ENCODE measurements at regions of chr21 and their contacts with region 1.

Region 1: GRCh38 chr21:20308586-20309315 is 689.5 kb upstream of the NCAM2 start:
- DNase-seq: no peak

Region 2: DNA sequence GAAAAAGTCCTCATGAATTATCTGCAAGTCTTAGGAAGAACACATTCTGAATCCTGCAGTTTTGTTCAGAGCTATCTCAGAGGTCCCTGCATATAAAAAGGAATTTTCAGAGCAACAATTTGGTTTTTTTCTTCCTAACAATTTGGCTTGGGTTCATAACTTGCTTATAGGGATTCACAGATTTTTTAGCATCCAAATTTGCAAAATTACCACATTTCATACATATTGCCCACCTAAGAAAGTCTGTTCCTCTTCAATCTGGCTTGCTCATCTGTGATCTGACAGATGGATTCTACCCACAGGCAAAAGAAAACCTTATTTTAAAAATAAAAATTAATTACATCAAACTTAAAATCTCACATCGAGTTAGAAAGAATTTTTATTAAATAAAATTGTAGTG is 24.9 kb before region 1 on chr21:
- intact Hi-C with region 1: loop called (anchors 1 kb)
- DNase-seq: no peak

Region 3: DNA sequence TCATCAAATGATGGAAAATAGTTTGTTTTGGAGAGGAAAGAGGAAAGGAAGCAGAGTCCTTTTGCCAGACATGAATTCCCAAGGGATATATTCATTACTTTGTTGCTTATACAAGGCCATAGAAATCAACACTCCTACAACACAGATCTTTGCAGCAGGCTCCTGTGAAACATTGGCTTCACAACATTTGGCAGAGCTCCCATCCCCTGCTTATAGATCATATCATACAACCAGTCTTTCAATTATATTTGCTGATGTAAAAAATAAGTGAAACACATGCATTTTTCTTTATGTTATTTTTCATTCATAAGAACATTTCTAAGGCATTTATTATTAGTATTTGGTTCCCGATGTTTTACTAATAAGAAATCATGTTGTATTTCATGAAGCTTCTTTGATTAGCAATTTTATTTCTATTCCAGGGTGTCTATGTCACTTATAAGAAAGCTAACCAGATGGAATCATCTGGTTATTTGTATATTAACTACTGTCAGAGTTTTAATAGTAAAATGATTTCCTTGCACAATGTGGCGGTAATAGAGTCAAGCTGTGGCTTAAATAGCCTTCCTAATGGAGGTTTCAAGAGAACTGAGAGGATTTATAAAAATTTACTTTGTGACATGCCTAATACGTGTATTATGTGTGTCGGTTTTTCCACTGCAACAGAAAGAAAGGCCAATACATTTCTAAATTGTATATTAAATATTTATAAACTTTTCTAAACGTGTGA is 219.1 kb after region 1 on chr21:
- intact Hi-C with region 1: no loop called
- DNase-seq: no peak

Region 4: GRCh38 chr21:20631633-20632032 is 322.9 kb after region 1 on chr21:
- intact Hi-C with region 1: no loop called
- DNase-seq: no peak

Measured in posterior cingulate gyrus (tissue), 11 donors.